ENCODE measurements at regions of chr7 and their contacts with region 1.

Region 1: DNA sequence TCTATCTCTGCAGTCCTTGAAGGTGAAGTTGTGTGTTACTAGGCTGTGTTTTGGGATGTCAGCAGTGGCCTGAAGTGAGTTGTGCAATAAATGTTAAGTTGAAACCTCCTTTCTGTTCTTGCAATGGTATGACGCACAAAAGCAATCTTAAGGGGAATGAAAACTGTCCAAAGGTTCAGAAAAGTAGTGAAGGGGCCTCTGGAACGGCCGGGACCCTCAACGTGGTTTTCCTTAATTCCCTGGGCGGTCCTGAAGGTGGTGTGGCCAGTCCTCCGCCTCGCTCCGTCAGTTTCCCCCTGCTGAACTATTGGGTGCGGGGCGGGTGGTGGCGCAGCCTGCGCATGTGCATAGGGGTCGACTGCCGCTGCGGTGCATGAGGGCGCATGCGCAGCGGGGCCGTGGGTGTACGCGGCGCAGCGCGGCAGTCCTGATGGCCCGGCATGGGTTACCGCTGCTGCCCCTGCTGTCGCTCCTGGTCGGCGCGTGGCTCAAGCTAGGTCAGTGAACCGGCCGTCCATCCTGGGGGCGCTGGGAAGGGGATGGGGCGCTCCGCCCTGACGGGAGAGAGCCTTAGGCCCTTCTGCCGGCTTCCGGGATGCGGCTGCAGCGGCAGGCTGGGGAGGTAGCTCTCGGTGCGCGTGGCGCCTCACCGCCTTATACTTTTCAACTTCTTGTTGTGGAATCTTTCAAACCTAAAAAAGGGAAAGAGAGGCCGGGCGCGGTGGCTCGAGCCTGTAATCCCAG is at the start of gene SUMF2:
- DNase-seq: peak; percentile 86 to 91
- ATAC-seq: peak; percentile 95
- H3K4me3 ChIP-seq: peak within 1 kb of the TSS; percentile 68 to 94 (median 91)
- H3K27ac ChIP-seq: peak within 1 kb of the TSS; percentile 87 to 97 (median 95)
- H3K4me1 ChIP-seq: peaks cover 6 to 13% of the 10 kb centered on the region in 2 donors
- H3K27me3 ChIP-seq: no peaks in the 10 kb centered on the region
- CTCF ChIP-seq: peak in 3 of 5 experiments; percentile 15 to 41 (median 31)
- POLR2A ChIP-seq: peak; percentile 89 to 91
- total RNA-seq, gene SUMF2: 29.8 to 32.0 (median 31.1) TPM

Region 2: GRCh38 chr7:54758702-54759592 is 1305.1 kb before region 1 on chr7 and contains the start of gene SEC61G:
- in situ Hi-C with region 1: loop called in 1 of 4 experiments (anchors 25 kb)
- intact Hi-C with region 1: no loop called
- DNase-seq: peak; percentile 94 to 95
- ATAC-seq: peak; percentile 97 to 99
- H3K4me3 ChIP-seq: peak within 1 kb of the TSS; percentile 86 to 100 (median 93)
- H3K27ac ChIP-seq: peak within 1 kb of the TSS; percentile 79 to 92 (median 89)
- H3K4me1 ChIP-seq: peaks cover 22 to 23% of the 10 kb centered on the region in 2 donors
- H3K27me3 ChIP-seq: no peaks in the 10 kb centered on the region
- CTCF ChIP-seq: no peak
- POLR2A ChIP-seq: peak; percentile 74 to 85
- total RNA-seq, gene SEC61G: 133 to 292 (median 165) TPM

Region 3: GRCh38 chr7:55951637-55952351 is 112.3 kb before region 1 on chr7 and contains the start of gene MRPS17:
- in situ Hi-C with region 1: loop called in 1 of 4 experiments (anchors 25 kb)
- intact Hi-C with region 1: no loop called
- DNase-seq: peak; percentile 82 to 91
- ATAC-seq: peak; percentile 98 to 99
- H3K4me3 ChIP-seq: peak within 1 kb of the TSS; percentile 78 to 99 (median 82)
- H3K27ac ChIP-seq: peak within 1 kb of the TSS; percentile 86 to 90 (median 88)
- H3K4me1 ChIP-seq: peaks cover 9 to 12% of the 10 kb centered on the region in 2 donors
- H3K27me3 ChIP-seq: no peaks in the 10 kb centered on the region
- CTCF ChIP-seq: peak in 1 of 5 experiments; percentile 36
- POLR2A ChIP-seq: peak; percentile 74 to 76
- total RNA-seq, gene MRPS17: 14.0 to 38.3 (median 22.0) TPM